ENCODE measurements at regions of chr12 and their contacts with region 1.

Region 1: DNA sequence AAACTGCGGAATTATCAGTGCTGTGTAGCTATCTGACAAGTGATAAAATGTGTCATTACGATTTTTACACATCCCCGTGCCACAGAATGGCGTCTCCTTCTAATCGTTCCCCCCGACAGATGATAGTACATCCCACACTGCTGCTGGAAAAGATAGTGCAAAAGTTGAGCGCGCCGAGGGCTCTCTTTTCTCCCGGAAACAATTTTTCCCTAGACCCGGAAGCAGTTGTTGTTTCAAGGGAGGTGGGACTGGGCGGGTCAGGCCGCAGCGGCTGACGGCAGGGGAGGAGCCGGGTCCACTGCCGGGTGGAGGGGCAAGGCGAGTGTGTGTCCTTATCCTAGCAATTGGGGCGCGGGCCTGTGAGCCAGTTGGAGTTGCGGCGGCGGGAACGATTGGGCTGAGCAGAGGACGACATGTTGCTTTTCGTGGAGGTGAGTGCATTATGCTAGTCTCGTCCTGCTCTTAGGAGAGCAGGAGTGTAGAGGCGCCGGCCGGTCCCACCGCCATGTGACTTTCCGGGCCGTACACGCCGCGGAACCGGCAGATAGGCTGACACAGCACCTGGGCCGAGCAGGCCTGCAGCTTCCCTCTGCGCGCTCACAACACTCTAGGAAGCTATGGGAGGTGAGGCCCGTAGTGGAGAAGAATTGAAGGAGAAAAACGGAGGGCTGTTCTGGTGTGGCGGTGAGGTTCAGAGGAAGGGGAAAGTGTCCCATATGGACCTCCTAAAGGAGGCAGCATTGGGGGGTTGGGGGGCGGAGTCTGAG is at the start of gene LARP4:
- DNase-seq: peak; percentile 78 to 94 (median 89)
- ATAC-seq: peak; percentile 95
- H3K4me3 ChIP-seq: peak within 1 kb of the TSS; percentile 97 to 100
- H3K4me3 Mint-ChIP-seq: peak within 1 kb of the TSS; percentile 99
- H3K27ac ChIP-seq: peak within 1 kb of the TSS; percentile 63 to 72
- H3K27ac Mint-ChIP-seq: peak within 1 kb of the TSS; percentile 97
- H3K4me1 ChIP-seq: peaks cover 23% of the 10 kb centered on the region
- H3K4me1 Mint-ChIP-seq: peaks cover 38% of the 10 kb centered on the region
- H3K27me3 ChIP-seq: no peaks in the 10 kb centered on the region
- H3K27me3 Mint-ChIP-seq: peaks cover 5% of the 10 kb centered on the region
- CTCF ChIP-seq: no peak
- total RNA-seq, gene LARP4: 20.1 to 22.3 TPM

Region 2: GRCh38 chr12:50111693-50112455 is 288.9 kb before region 1 on chr12 and contains the start of gene COX14:
- CTCF ChIA-PET with region 1: no interaction called
- POLR2A ChIA-PET with region 1: interaction called, 5 read pairs
- intact Hi-C with region 1: loop called in 1 of 2 experiments (anchors 10 kb)
- DNase-seq: peak; percentile 98 to 100 (median 99)
- ATAC-seq: peak; percentile 82
- H3K4me3 ChIP-seq: peak within 1 kb of the TSS; percentile 88 to 98
- H3K4me3 Mint-ChIP-seq: peak within 1 kb of the TSS; percentile 99
- H3K27ac ChIP-seq: peak within 1 kb of the TSS; percentile 97 to 98
- H3K27ac Mint-ChIP-seq: peak within 1 kb of the TSS; percentile 95
- H3K4me1 ChIP-seq: peaks cover 36% of the 10 kb centered on the region
- H3K4me1 Mint-ChIP-seq: peaks cover 35% of the 10 kb centered on the region
- H3K27me3 ChIP-seq: no peaks in the 10 kb centered on the region
- H3K27me3 Mint-ChIP-seq: no peaks in the 10 kb centered on the region
- CTCF ChIP-seq: peak; percentile 97
- total RNA-seq, gene COX14: 42.2 to 43.3 TPM

Region 3: GRCh38 chr12:50167041-50167828 is 233.5 kb before region 1 on chr12 and contains the start of gene CERS5:
- CTCF ChIA-PET with region 1: no interaction called
- POLR2A ChIA-PET with region 1: no interaction called
- intact Hi-C with region 1: loop called in 1 of 2 experiments (anchors 2 kb)
- DNase-seq: peak; percentile 92 to 98 (median 96)
- ATAC-seq: peak; percentile 95
- H3K4me3 ChIP-seq: peak within 1 kb of the TSS; percentile 85 to 90
- H3K4me3 Mint-ChIP-seq: peak within 1 kb of the TSS; percentile 92
- H3K27ac ChIP-seq: peak within 1 kb of the TSS; percentile 88 to 93
- H3K27ac Mint-ChIP-seq: peak within 1 kb of the TSS; percentile 95
- H3K4me1 ChIP-seq: peaks cover 15% of the 10 kb centered on the region
- H3K4me1 Mint-ChIP-seq: peaks cover 29% of the 10 kb centered on the region
- H3K27me3 ChIP-seq: no peaks in the 10 kb centered on the region
- H3K27me3 Mint-ChIP-seq: no peaks in the 10 kb centered on the region
- CTCF ChIP-seq: no peak
- total RNA-seq, gene CERS5: 45.2 to 46.2 TPM

Region 4: DNA sequence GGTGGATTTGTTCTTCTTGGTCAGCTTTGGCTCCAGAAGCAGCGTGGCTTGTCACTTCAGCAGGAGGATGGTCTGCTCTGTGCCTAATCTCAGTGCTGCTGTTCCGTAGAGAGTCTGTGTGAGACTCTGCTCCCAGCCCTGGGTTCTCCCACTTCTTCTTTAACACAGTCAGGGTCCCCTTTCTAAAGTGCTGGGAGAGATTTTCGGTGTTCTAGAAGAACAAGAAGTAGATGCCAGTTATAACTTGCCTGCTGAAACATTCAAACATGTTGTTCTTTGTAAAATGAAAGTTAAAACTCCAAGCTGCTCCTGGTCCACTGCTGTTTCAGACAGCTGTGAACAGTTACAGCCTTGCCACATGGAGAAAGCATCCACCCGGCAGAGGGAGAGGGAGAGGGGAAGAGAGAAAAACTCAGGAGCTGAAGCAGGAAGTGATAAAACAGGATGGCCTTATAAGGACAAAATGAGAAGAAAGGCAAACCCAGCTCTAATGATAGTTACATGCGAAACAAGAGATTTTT is 178.4 kb before region 1 on chr12:
- CTCF ChIA-PET with region 1: no interaction called
- POLR2A ChIA-PET with region 1: no interaction called
- intact Hi-C with region 1: loop called in 1 of 2 experiments (anchors 5 kb)
- DNase-seq: peak in 3 of 9 experiments; percentile 47 to 67 (median 56)
- ATAC-seq: peak; percentile 56
- H3K4me3 ChIP-seq: peak overlapping the region; percentile 56 to 68
- H3K4me3 Mint-ChIP-seq: no peak overlapping the region
- H3K27ac ChIP-seq: peak overlapping the region; percentile 46 to 84
- H3K27ac Mint-ChIP-seq: no peak overlapping the region
- H3K4me1 ChIP-seq: peaks cover 27% of the 10 kb centered on the region
- H3K4me1 Mint-ChIP-seq: peaks cover 33% of the 10 kb centered on the region
- H3K27me3 ChIP-seq: no peaks in the 10 kb centered on the region
- H3K27me3 Mint-ChIP-seq: no peaks in the 10 kb centered on the region
- CTCF ChIP-seq: no peak

Region 5: GRCh38 chr12:50637870-50638481 is 237.2 kb after region 1 on chr12:
- CTCF ChIA-PET with region 1: no interaction called
- POLR2A ChIA-PET with region 1: no interaction called
- intact Hi-C with region 1: loop called in 1 of 2 experiments (anchors 5 kb)
- DNase-seq: peak in 2 of 9 experiments; percentile 46 to 65
- ATAC-seq: peak; percentile 62
- H3K4me3 ChIP-seq: no peak overlapping the region
- H3K4me3 Mint-ChIP-seq: no peak overlapping the region
- H3K27ac ChIP-seq: no peak overlapping the region
- H3K27ac Mint-ChIP-seq: peak overlapping the region; percentile 82
- H3K4me1 ChIP-seq: peaks cover 5% of the 10 kb centered on the region
- H3K4me1 Mint-ChIP-seq: peaks cover 26% of the 10 kb centered on the region
- H3K27me3 ChIP-seq: no peaks in the 10 kb centered on the region
- H3K27me3 Mint-ChIP-seq: no peaks in the 10 kb centered on the region
- CTCF ChIP-seq: peak; percentile 80

Region 6: DNA sequence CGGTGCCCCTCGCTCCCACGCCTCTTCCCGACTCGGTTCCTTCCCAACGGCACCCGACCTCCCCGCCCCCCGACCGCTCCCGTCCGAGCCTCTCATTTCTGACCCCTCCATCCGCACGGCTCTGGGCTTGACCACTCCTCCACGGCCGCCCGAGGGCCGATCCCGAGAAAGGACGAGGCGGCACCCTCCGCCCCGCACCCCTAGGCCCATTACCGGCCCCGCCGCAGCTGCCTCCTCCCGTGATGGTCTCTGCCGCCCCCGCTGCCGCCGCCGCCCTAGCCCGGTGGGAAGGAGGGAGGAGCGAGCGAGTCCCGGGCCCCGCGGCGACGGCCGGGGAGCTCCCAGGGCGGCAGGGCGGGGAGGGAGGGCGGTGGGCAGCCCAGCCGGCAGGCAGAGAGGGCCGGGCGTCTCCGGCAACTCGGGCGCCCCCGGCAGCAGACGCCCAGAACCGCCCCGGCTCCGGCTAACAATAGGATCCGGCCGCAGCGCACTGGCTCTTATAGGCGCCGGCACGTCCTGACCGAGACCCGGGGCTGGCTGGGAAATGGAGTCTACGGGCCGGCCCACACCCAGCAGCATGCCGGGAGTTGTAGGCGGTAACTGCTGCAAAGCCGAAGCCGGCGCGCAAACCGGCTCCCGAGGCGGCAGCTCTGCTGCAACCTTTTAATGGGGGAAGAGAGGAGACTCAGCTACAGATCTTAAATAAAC is 682.5 kb after region 1 on chr12 and contains the start of gene CSRNP2:
- CTCF ChIA-PET with region 1: no interaction called
- POLR2A ChIA-PET with region 1: no interaction called
- intact Hi-C with region 1: loop called in 1 of 2 experiments (anchors 2 kb)
- DNase-seq: peak; percentile 90 to 97 (median 94)
- ATAC-seq: peak; percentile 99
- H3K4me3 ChIP-seq: peak within 1 kb of the TSS; percentile 88
- H3K4me3 Mint-ChIP-seq: peak within 1 kb of the TSS; percentile 94
- H3K27ac ChIP-seq: peak within 1 kb of the TSS; percentile 61 to 62
- H3K27ac Mint-ChIP-seq: peak within 1 kb of the TSS; percentile 91
- H3K4me1 ChIP-seq: peaks cover 12% of the 10 kb centered on the region
- H3K4me1 Mint-ChIP-seq: peaks cover 36% of the 10 kb centered on the region
- H3K27me3 ChIP-seq: no peaks in the 10 kb centered on the region
- H3K27me3 Mint-ChIP-seq: no peaks in the 10 kb centered on the region
- CTCF ChIP-seq: no peak
- total RNA-seq, gene CSRNP2: 19.5 to 19.9 TPM

Measured in CD8-positive, alpha-beta T cell (primary cell).